Heart left ventricle (tissue), 16 donors: ENCODE measurements at regions of chr16 and their contacts with region 1.

Region 1: DNA sequence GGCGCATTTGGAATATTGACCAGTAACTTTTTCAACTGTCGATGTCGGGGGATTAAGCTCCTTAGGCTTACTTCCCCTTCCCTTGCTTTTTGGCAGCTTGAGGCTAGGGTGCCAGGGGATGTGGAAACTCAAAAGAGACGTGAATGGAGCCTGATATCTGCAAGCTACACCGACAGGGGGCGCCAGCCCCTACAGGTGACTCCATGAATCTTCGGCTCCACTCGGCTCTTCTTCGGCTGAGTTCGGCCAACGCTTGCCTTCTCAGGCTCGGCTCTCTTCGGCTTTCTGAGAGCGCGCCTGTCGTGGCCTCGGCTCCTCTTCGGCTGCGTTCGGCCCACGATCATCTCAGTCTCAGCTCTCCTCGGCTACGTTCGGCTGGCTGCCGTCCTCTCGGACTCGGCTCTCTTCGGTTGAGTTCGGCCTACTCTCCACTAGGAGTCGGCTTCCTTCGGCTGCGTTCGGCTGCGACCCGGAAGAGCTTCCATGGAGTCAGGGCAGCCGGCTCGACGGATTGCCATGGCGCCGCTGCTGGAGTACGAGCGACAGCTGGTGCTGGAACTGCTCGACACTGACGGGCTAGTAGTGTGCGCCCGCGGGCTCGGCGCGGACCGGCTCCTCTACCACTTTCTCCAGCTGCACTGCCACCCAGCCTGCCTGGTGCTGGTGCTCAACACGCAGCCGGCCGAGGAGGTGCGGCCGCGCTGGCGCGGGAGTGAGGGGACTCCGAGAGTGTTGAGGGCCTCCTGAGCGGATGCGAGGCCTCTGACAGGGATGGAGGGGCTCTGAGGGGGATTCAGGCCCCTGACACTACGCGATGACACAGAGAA is at the start of gene ERCC4:
- DNase-seq: peak; percentile 99 to 100 (median 100)
- ATAC-seq: peak; percentile 96 to 98 (median 98)
- H3K4me3 ChIP-seq: peak within 1 kb of the TSS; percentile 51 to 96 (median 87)
- H3K27ac ChIP-seq: peak within 1 kb of the TSS; percentile 54 to 90 (median 82)
- H3K4me1 ChIP-seq: peaks cover 3 to 34% (median 19%) of the 10 kb centered on the region in 12 donors
- H3K27me3 ChIP-seq: no peaks in the 10 kb centered on the region
- CTCF ChIP-seq: peak; percentile 84 to 96 (median 92)
- POLR2A ChIP-seq: peak in 1 of 2 donors; percentile 64
- total RNA-seq, gene ERCC4: 6.3 to 15.2 (median 8.3) TPM

Region 2: DNA sequence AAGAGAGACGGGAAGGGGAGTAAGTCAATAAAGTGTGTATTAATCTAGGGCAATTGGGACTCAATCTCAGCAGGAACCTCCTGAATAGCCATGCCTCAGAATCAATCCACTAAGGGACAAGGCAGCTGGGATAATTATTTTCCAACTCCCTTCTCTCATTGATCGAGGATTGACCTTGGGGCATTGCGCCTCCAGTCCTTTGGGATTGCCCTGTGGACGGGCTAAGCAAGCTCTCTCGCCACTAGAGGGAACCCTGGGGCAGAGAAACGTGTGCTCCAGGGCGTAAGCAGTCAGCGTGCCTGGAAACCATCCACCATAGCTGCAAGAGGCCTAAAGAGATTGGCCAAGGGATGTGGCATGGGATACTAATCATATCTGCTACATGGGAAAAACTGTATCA is 53.8 kb before region 1 on chr16:
- intact Hi-C with region 1: loop called in 6 of 10 experiments (anchors 1 to 5 kb)
- DNase-seq: peak; percentile 69 to 83 (median 73)
- ATAC-seq: peak; percentile 64 to 95 (median 94)
- H3K4me3 ChIP-seq: no peak overlapping the region
- H3K27ac ChIP-seq: no peak overlapping the region
- H3K4me1 ChIP-seq: no peaks in the 10 kb centered on the region
- H3K27me3 ChIP-seq: peaks cover 0 to 8% (median 0%) of the 10 kb centered on the region in 9 donors
- CTCF ChIP-seq: peak; percentile 37 to 77 (median 65)
- POLR2A ChIP-seq: no peak

Region 3: GRCh38 chr16:14063618-14064581 is 144.0 kb after region 1 on chr16:
- intact Hi-C with region 1: loop called in 2 of 10 experiments (anchors 5 to 10 kb)
- DNase-seq: no peak
- ATAC-seq: no peak
- H3K4me3 ChIP-seq: no peak overlapping the region
- H3K27ac ChIP-seq: no peak overlapping the region
- H3K4me1 ChIP-seq: no peaks in the 10 kb centered on the region
- H3K27me3 ChIP-seq: no peaks in the 10 kb centered on the region
- CTCF ChIP-seq: no peak
- POLR2A ChIP-seq: no peak

Region 4: GRCh38 chr16:14186007-14186794 is 266.3 kb after region 1 on chr16:
- intact Hi-C with region 1: loop called (anchors 2 to 10 kb)
- DNase-seq: peak in 4 of 5 donors; percentile 37 to 60 (median 46)
- ATAC-seq: peak; percentile 59 to 75 (median 64)
- H3K4me3 ChIP-seq: peak overlapping the region in 11 of 12 donors; percentile 28 to 65 (median 51)
- H3K27ac ChIP-seq: peak overlapping the region; percentile 62 to 85 (median 75)
- H3K4me1 ChIP-seq: peaks cover 0 to 67% (median 36%) of the 10 kb centered on the region in 12 donors
- H3K27me3 ChIP-seq: no peaks in the 10 kb centered on the region
- CTCF ChIP-seq: peak; percentile 16 to 58 (median 45)
- POLR2A ChIP-seq: peak in 1 of 2 donors; percentile 44

Region 5: GRCh38 chr16:14240219-14240843 is 320.4 kb after region 1 on chr16:
- intact Hi-C with region 1: loop called in 9 of 10 experiments (anchors 5 to 10 kb)
- DNase-seq: no peak
- ATAC-seq: peak in 3 of 4 donors; percentile 40 to 78 (median 77)
- H3K4me3 ChIP-seq: no peak overlapping the region
- H3K27ac ChIP-seq: peak overlapping the region in 7 of 12 donors; percentile 20 to 37 (median 24)
- H3K4me1 ChIP-seq: peaks cover 0 to 29% (median 8%) of the 10 kb centered on the region in 12 donors
- H3K27me3 ChIP-seq: no peaks in the 10 kb centered on the region
- CTCF ChIP-seq: no peak
- POLR2A ChIP-seq: no peak

Region 6: DNA sequence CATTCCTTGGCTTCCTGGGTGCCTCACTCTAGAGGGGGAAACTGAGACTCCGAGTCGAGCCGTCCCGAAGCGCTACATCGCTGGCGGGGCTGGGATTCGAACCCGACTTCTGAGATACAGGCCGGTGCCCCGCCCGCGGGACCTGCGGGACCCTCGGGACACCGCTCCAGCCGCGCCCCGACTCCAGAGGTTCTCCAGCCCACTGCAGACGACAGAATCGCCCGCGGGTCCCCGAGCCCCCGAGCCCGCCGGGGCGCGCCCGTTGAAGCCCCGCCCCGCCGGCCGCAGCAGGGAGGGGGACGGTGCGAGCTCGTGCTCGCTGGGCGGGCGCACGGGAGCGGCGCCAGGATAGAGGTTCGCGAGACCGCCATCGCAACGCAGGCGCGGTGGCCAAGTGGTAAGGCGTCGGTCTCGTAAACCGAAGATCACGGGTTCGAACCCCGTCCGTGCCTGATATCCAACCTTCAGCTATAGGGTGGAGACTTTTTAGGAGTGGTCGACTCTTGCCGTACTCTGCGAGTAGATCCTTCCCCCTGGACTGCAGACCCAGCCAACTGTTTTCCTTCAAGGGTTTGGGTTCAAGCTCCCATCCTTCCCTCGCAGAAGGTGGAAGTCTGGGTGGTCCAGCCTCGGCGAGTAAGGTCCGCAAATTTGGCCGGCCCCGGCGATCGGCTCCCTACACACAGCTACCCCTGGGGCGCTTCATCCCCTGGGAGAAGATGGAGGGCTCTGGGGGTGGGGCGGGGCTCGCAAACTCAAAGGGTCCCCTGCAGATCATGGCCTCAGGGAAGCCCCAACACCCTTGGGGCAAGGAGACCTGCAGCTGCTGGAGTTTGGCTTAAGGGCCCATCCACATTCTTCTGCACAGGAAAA is 365.9 kb after region 1 on chr16:
- intact Hi-C with region 1: loop called in 8 of 10 experiments (anchors 1 to 10 kb)
- DNase-seq: peak; percentile 92 to 95 (median 93)
- ATAC-seq: peak; percentile 85 to 96 (median 93)
- H3K4me3 ChIP-seq: peak overlapping the region; percentile 50 to 98 (median 89)
- H3K27ac ChIP-seq: peak overlapping the region; percentile 11 to 90 (median 82)
- H3K4me1 ChIP-seq: peaks cover 0 to 22% (median 8%) of the 10 kb centered on the region in 12 donors
- H3K27me3 ChIP-seq: no peaks in the 10 kb centered on the region
- CTCF ChIP-seq: no peak
- POLR2A ChIP-seq: peak in 1 of 2 donors; percentile 49